Mammary epithelial cell (primary cell): ENCODE measurements at regions of chr13 and their contacts with region 1.

Region 1: DNA sequence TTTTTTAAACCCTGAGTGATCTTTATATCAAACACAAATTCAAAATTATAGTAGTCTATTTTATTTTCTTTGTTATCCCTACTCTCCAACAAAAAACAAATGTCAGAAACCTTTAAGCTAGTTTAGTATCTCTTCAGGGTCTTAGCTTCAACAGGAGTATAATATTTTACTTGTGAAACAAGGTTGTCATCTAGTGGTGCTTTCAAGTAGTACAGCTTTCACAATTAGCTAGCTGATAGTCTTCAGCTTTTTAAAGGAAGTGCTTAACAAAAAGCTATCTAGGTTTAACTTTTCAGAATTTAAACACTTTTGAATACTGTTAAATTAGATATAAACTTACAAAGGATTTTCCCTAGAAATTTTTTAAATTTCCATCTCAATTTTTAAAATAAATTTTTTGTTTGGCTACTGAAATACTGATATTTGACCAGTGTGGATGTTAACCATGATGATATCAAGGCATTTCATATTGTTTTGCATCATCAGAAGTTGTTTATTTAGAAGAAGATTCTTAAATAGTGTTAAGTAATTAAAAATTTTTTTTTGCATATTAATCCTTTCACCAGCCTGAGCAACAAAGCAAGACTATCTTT is 34.2 kb downstream of the TDRD3 start:
- DNase-seq: peak; percentile 46
- H3K4me3 ChIP-seq: no peak overlapping the region
- H3K27ac ChIP-seq: no peak overlapping the region
- H3K4me1 ChIP-seq: no peaks in the 10 kb centered on the region
- H3K27me3 ChIP-seq: no peaks in the 10 kb centered on the region
- CTCF ChIP-seq: peak; percentile 91 to 92

Region 2: DNA sequence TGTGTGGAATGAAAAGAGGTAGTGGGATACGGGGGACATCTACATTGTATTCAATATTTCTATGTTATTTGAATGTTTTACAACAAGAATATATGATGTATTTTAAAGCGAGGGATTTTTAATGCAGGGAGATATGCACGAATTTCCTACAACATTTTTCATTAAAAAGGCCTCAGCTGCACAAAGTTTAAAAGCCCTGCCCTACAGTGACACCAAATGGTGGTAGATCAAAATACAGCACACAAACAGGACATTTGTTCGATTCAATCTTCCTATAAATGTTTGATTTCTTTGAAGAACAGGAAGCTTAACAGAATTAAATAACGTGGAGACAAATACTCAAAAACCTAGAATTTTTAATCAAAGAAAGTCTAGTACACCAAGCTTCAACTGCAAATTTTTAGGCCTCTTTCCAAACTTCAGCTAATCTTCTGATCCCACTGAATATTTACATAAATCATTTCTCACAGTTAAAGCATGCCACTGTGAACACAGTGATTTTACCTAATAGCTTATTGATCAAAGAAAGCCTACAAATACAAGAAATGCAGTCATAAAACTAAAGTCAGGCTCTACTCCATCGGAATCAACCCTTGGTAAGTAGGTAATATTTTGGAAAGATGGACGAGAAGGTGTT is 524.7 kb before region 1 on chr13:
- CTCF ChIA-PET with region 1: no interaction called
- dilution Hi-C with region 1: no loop called
- in situ Hi-C with region 1: no loop called
- intact Hi-C with region 1: loop called (anchors 5 kb)
- DNase-seq: no peak
- H3K4me3 ChIP-seq: no peak overlapping the region
- H3K27ac ChIP-seq: no peak overlapping the region
- H3K4me1 ChIP-seq: no peaks in the 10 kb centered on the region
- H3K27me3 ChIP-seq: no peaks in the 10 kb centered on the region
- CTCF ChIP-seq: peak; percentile 41 to 72

Region 3: GRCh38 chr13:60335531-60335930 is 95.7 kb before region 1 on chr13:
- CTCF ChIA-PET with region 1: no interaction called
- dilution Hi-C with region 1: no loop called
- in situ Hi-C with region 1: no loop called
- intact Hi-C with region 1: loop called (anchors 1 kb)
- DNase-seq: no peak
- H3K4me3 ChIP-seq: no peak overlapping the region
- H3K27ac ChIP-seq: no peak overlapping the region
- H3K4me1 ChIP-seq: no peaks in the 10 kb centered on the region
- H3K27me3 ChIP-seq: peaks cover 4% of the 10 kb centered on the region
- CTCF ChIP-seq: peak; percentile 52 to 60

Region 4: DNA sequence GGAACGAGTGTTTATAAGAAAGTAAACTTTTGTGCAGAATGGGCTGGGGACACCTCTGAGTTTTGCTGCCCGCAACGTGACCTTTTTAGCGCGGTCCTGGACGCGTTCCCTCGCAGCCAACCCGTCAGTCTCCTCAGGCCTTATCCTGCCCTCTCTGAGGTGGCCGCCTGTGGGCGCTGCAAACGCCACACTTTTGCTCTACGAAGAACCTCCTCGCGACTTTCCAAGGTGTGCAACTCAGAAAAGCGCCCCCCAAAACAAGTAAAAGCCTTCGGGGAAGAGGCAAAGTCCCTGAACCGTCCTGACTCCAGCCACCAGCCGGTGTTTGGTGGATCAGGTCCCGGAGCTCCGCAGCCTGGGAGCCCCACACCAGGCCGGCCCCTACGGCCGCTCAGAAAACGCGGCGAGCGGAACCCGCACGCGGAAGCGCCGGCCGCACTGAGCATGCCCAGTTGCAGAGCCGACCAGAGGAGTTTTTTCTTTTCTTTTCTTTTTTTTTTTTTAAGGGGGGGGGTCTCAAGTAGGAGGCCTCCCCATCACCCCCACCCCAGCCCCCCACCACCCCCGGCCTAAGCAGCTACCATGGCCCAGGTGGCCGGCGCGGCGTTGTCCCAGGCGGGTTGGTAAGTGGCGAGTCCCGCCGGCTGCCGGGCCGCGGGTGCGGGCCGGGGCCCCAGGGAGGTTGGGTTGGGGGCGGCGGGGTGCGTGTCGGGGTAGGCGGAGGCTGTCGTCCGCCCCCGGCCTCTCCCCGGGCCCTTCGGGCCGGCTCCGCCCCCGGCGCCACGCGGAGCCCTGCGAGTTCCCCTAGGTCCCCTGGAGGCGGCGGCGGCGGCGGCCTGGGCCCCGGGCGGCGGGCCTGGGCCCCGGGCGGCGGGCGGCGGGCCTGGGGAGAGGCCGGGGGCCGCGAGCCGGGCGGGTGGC is 34.2 kb before region 1 on chr13 and contains the start of gene TDRD3:
- CTCF ChIA-PET with region 1: no interaction called
- dilution Hi-C with region 1: no loop called
- in situ Hi-C with region 1: no loop called
- intact Hi-C with region 1: loop called (anchors 2 kb)
- DNase-seq: peak; percentile 82
- H3K4me3 ChIP-seq: peak within 1 kb of the TSS; percentile 64 to 97 (median 84)
- H3K27ac ChIP-seq: peak within 1 kb of the TSS; percentile 72
- H3K4me1 ChIP-seq: peaks cover 15% of the 10 kb centered on the region
- H3K27me3 ChIP-seq: no peaks in the 10 kb centered on the region
- CTCF ChIP-seq: peak; percentile 68 to 87
- total RNA-seq, gene TDRD3: 18.1 to 18.2 TPM

Region 5: GRCh38 chr13:60788156-60788829 is 357.1 kb after region 1 on chr13:
- CTCF ChIA-PET with region 1: no interaction called
- dilution Hi-C with region 1: no loop called
- in situ Hi-C with region 1: no loop called
- intact Hi-C with region 1: no loop called
- DNase-seq: peak; percentile 2
- H3K4me3 ChIP-seq: no peak overlapping the region
- H3K27ac ChIP-seq: no peak overlapping the region
- H3K4me1 ChIP-seq: peaks cover 4% of the 10 kb centered on the region
- H3K27me3 ChIP-seq: no peaks in the 10 kb centered on the region
- CTCF ChIP-seq: no peak

Region 6: GRCh38 chr13:61247149-61247936 is 816.1 kb after region 1 on chr13:
- CTCF ChIA-PET with region 1: no interaction called
- dilution Hi-C with region 1: no loop called
- in situ Hi-C with region 1: no loop called
- intact Hi-C with region 1: no loop called
- DNase-seq: no peak
- H3K4me3 ChIP-seq: no peak overlapping the region
- H3K27ac ChIP-seq: no peak overlapping the region
- H3K4me1 ChIP-seq: no peaks in the 10 kb centered on the region
- H3K27me3 ChIP-seq: no peaks in the 10 kb centered on the region
- CTCF ChIP-seq: no peak